ENCODE measurements at regions of chr1 and their contacts with region 1.

Region 1: GRCh38 chr1:210407207-210407886 is 78.6 kb downstream of the HHAT start:
- DNase-seq: peak; percentile 49
- H3K4me3 Mint-ChIP-seq: no peak overlapping the region
- H3K27ac Mint-ChIP-seq: no peak overlapping the region
- H3K4me1 Mint-ChIP-seq: no peaks in the 10 kb centered on the region
- H3K27me3 Mint-ChIP-seq: peaks cover 23% of the 10 kb centered on the region

Region 2: DNA sequence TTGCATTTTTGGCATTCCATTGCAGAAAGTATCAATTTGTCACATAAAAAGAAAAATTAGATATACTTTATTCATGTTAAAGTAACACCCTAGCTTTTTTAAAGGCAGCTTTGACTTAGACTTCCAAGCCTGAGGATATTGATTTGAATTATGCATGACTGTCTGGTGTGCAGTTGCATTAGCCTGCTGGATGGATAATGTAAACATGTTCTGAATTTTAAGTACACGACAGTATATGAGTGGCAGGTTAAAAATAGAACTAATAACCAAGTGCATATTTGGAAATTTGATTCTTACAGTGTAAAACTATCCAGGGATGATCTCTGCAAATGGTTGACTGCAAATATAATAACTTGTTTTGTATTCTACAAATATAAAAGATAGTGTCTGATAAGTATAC is 345.4 kb before region 1 on chr1:
- intact Hi-C with region 1: no loop called
- DNase-seq: no peak
- H3K4me3 Mint-ChIP-seq: no peak overlapping the region
- H3K27ac Mint-ChIP-seq: no peak overlapping the region
- H3K4me1 Mint-ChIP-seq: no peaks in the 10 kb centered on the region
- H3K27me3 Mint-ChIP-seq: no peaks in the 10 kb centered on the region

Region 3: GRCh38 chr1:210951279-210951678 is 543.9 kb after region 1 on chr1:
- intact Hi-C with region 1: loop called (anchors 2 kb)
- DNase-seq: no peak
- H3K4me3 Mint-ChIP-seq: no peak overlapping the region
- H3K27ac Mint-ChIP-seq: no peak overlapping the region
- H3K4me1 Mint-ChIP-seq: no peaks in the 10 kb centered on the region
- H3K27me3 Mint-ChIP-seq: no peaks in the 10 kb centered on the region

Region 4: GRCh38 chr1:211133836-211134669 is 726.7 kb after region 1 on chr1 and contains the start of gene KCNH1:
- intact Hi-C with region 1: loop called (anchors 1 kb)
- DNase-seq: peak; percentile 65
- H3K4me3 Mint-ChIP-seq: peak within 1 kb of the TSS; percentile 35
- H3K27ac Mint-ChIP-seq: no peak within 1 kb of the TSS
- H3K4me1 Mint-ChIP-seq: peaks cover 5% of the 10 kb centered on the region
- H3K27me3 Mint-ChIP-seq: peaks cover 79% of the 10 kb centered on the region
- total RNA-seq, gene KCNH1: not detected in 2 replicates

Measured in activated T-helper 2 cell treated with anti-CD3 and anti-CD28 coated beads, Interferon-gamma antibody, Interleukin-2, Interleukin-4, amounts not matched to agents 10 μg/mL and 5 μg/mL and 100 μg/mL, durations not matched to agents 14 hours and 24 hours and 36 hours (primary cell).